ENCODE measurements at regions of chr7 and their contacts with region 1.

Region 1: DNA sequence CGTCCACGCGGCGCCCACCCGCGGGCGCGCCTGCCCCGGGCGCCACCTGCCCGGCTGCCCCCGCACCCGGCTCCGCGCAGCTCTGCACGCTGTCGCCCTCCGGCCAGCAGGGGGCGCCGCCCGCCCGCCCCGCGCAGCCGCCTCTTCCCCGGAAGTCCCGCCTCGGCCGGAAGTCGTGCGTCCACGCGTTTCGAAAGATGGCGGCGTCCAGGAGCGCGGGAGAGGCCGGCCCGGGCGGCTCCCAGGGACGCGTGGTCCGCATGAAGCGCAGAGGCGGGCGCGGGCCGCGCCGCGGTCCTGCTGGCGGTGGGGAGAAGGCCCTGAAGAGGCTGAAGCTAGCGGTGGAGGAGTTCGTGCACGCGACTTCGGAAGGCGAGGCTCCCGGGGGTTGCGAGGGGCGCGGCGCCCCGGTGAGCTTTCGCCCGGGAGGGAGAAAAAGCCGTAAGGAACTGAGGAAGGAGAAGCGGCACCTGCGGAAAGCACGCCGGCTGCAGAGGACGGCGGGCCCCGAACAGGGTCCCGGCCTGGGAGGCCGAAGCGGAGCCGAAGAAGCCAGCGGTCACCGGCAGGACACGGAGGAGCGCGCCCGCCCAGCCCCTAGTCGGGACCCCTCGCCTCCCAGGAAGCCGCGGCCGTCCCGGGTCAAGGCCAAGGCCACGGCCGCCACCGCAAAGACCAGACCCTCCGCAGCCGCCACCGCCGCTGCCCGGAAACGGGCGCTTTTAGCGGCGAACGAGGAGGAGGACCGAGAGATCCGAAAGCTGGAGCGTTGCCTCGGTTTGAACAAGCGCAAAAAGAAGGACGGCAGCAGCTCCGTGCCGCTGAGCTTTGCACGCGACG is at the start of gene NOM1:
- DNase-seq: peak; percentile 98
- H3K4me3 Mint-ChIP-seq: peak within 1 kb of the TSS; percentile 100
- H3K27ac Mint-ChIP-seq: peak within 1 kb of the TSS; percentile 96
- H3K4me1 Mint-ChIP-seq: peaks cover 28% of the 10 kb centered on the region
- H3K27me3 Mint-ChIP-seq: peaks cover 16% of the 10 kb centered on the region
- total RNA-seq, gene NOM1: 50.5 and 54.5 TPM in 2 replicates

Region 2: DNA sequence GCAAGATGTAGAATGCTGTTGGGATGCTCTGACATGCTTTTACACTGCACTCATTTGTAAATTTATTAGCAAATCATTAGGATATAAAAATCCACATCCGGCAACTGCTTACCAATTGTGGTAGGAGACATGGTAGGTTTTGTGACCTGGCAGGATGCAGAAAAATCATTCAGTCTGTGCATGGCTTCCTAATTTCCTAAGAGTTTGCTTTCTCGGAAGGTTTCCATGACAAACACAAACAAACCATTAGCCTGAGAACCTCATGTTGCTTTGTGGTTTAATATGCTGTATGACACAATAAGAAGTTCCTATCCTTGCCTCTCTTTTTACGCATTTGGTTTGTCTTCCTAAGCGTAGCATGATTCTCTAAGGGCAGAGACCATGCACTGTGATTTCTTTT is 42.1 kb before region 1 on chr7:
- intact Hi-C with region 1: loop called (anchors 2 kb)
- DNase-seq: no peak
- H3K4me3 Mint-ChIP-seq: no peak overlapping the region
- H3K27ac Mint-ChIP-seq: no peak overlapping the region
- H3K4me1 Mint-ChIP-seq: peaks cover 12% of the 10 kb centered on the region
- H3K27me3 Mint-ChIP-seq: peaks cover 11% of the 10 kb centered on the region

Region 3: DNA sequence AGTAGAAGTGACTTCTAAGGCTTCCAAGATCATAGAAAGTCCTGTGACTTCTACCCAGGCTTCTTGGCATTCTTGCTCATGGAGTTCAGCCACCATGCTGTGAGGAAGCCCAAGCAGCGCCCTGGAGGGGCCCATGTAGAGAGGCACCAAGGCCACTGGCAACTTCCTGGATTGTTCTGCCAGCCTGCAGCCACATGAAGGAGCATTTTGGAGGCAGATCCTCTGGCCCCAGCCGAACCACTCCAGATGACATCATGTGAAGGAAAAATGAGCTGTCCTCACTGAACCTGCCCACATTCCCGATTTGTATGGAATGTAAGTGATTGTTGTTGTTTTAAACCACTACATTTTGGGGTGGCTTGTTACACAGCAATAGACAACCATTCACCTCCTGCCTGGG is 112.2 kb after region 1 on chr7:
- intact Hi-C with region 1: no loop called
- DNase-seq: no peak
- H3K4me3 Mint-ChIP-seq: no peak overlapping the region
- H3K27ac Mint-ChIP-seq: no peak overlapping the region
- H3K4me1 Mint-ChIP-seq: no peaks in the 10 kb centered on the region
- H3K27me3 Mint-ChIP-seq: peaks cover 5% of the 10 kb centered on the region

Region 4: DNA sequence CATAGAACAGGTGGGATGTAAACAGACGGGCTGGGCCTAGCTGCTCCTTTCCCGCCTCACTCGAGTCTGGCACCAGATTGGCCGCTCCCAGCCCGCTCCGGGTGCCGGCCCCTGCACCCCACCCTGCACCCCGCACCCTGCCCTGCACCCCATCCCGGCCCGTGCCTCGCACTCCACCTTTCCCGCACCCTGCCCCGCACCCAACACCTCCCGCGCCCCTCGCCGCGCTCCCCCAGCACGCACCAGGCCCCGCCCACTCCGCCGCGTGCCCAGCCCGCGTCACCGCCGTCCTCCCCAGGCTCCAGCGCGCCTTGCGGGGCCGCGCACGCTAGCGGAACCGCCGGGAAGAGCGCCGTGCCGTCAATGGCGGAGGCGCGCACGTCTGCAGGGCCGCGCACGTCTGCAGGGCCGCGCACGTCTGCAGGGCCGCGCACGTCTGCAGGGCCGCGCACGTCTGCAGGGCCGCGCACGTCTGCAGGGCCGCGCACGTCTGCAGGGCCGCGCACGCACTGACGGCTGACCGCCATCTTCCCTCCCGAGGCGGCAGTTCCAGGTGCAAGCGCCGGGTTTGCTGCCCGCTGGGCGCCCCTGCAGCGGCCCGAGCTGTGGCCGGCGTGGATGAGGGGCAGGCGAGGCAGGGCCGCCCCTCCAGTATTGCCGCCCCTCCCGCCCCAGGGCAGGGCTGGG is 188.8 kb after region 1 on chr7 and contains the start of gene UBE3C:
- intact Hi-C with region 1: loop called (anchors 2 kb)
- DNase-seq: peak; percentile 98
- H3K4me3 Mint-ChIP-seq: peak within 1 kb of the TSS; percentile 88
- H3K27ac Mint-ChIP-seq: peak within 1 kb of the TSS; percentile 99
- H3K4me1 Mint-ChIP-seq: peaks cover 31% of the 10 kb centered on the region
- H3K27me3 Mint-ChIP-seq: no peaks in the 10 kb centered on the region
- total RNA-seq, gene UBE3C: 89.9 and 95.4 TPM in 2 replicates

Measured in activated CD4-positive, alpha-beta T cell treated with anti-CD3 and anti-CD28 coated beads, Interleukin-2, amount 10 ng/mL, durations not matched to agents 24 days and 14 days (primary cell).